ENCODE measurements at regions of chr6 and their contacts with region 1.

Region 1: GRCh38 chr6:26607434-26608230 is 10.9 kb downstream of the ABT1 start:
- DNase-seq: no peak
- H3K4me3 ChIP-seq: peak overlapping the region; percentile 27
- H3K27ac ChIP-seq: no peak overlapping the region
- H3K4me1 ChIP-seq: peaks cover 5% of the 10 kb centered on the region
- H3K27me3 ChIP-seq: peaks cover 16% of the 10 kb centered on the region
- CTCF ChIP-seq: peak; percentile 72

Region 2: GRCh38 chr6:27081931-27082330 is 474.3 kb after region 1 on chr6:
- intact Hi-C with region 1: loop called (anchors 5 kb)
- DNase-seq: no peak
- H3K4me3 ChIP-seq: no peak overlapping the region
- H3K27ac ChIP-seq: no peak overlapping the region
- H3K4me1 ChIP-seq: peaks cover 4% of the 10 kb centered on the region
- H3K27me3 ChIP-seq: peaks cover 88% of the 10 kb centered on the region
- CTCF ChIP-seq: no peak

Measured in left ventricle myocardium inferior (tissue), 1 donor.